ENCODE measurements at regions of chr10 and their contacts with region 1.

Region 1: GRCh38 chr10:22714479-22715289 is at the start of gene PIP4K2A:
- DNase-seq: peak; percentile 71 to 82 (median 81)
- H3K4me3 ChIP-seq: peak within 1 kb of the TSS; percentile 91
- H3K4me3 Mint-ChIP-seq: peak within 1 kb of the TSS; percentile 90 to 99 (median 95)
- H3K27ac ChIP-seq: peak within 1 kb of the TSS; percentile 88
- H3K27ac Mint-ChIP-seq: peak within 1 kb of the TSS; percentile 84 to 95 (median 93)
- H3K4me1 ChIP-seq: peaks cover 20% of the 10 kb centered on the region
- H3K4me1 Mint-ChIP-seq: peaks cover 30 to 34% (median 33%) of the 10 kb centered on the region in 3 donors
- H3K27me3 ChIP-seq: no peaks in the 10 kb centered on the region
- H3K27me3 Mint-ChIP-seq: peaks cover 0 to 4% of the 10 kb centered on the region in 2 donors
- total RNA-seq, gene PIP4K2A: 116 to 130 TPM

Region 2: DNA sequence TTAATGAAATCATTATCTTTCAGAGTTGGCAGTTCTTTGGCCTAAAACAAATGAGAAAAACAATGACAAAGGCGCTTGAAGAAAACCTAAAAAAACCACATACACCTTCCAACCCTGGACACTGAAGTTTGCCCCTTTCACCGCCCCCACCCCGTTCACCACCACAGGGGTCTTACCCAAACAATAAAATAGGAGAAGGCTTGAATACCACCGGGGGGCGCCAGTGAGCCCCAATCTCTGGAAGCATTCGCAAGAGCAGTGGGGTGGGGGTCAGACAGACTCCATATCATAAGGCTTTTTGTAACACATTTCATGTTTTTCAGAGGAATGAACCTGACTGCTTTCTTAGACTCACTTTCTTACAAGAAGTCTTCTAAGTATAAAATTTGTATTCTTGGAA is 164.0 kb before region 1 on chr10:
- CTCF ChIA-PET with region 1: no interaction called
- POLR2A ChIA-PET with region 1: no interaction called
- DNase-seq: peak; percentile 55 to 81 (median 65)
- H3K4me3 ChIP-seq: no peak overlapping the region
- H3K4me3 Mint-ChIP-seq: peak overlapping the region in 1 of 7 donors; percentile 46
- H3K27ac ChIP-seq: no peak overlapping the region
- H3K27ac Mint-ChIP-seq: peak overlapping the region in 7 of 8 donors; percentile 40 to 92 (median 69)
- H3K4me1 ChIP-seq: no peaks in the 10 kb centered on the region
- H3K4me1 Mint-ChIP-seq: peaks cover 33 to 41% (median 38%) of the 10 kb centered on the region in 3 donors
- H3K27me3 ChIP-seq: no peaks in the 10 kb centered on the region
- H3K27me3 Mint-ChIP-seq: no peaks in the 10 kb centered on the region

Region 3: GRCh38 chr10:22580711-22581110 is 134.0 kb before region 1 on chr10:
- CTCF ChIA-PET with region 1: interaction called, 5 read pairs
- POLR2A ChIA-PET with region 1: interaction called, 17 read pairs
- DNase-seq: no peak
- H3K4me3 ChIP-seq: no peak overlapping the region
- H3K4me3 Mint-ChIP-seq: no peak overlapping the region
- H3K27ac ChIP-seq: no peak overlapping the region
- H3K27ac Mint-ChIP-seq: peak overlapping the region in 7 of 8 donors; percentile 48 to 86 (median 70)
- H3K4me1 ChIP-seq: no peaks in the 10 kb centered on the region
- H3K4me1 Mint-ChIP-seq: peaks cover 54 to 85% (median 84%) of the 10 kb centered on the region in 3 donors
- H3K27me3 ChIP-seq: no peaks in the 10 kb centered on the region
- H3K27me3 Mint-ChIP-seq: no peaks in the 10 kb centered on the region

Region 4: GRCh38 chr10:22874189-22874854 is 159.6 kb after region 1 on chr10:
- CTCF ChIA-PET with region 1: no interaction called
- POLR2A ChIA-PET with region 1: no interaction called
- DNase-seq: no peak
- H3K4me3 ChIP-seq: no peak overlapping the region
- H3K4me3 Mint-ChIP-seq: no peak overlapping the region
- H3K27ac ChIP-seq: no peak overlapping the region
- H3K27ac Mint-ChIP-seq: peak overlapping the region in 1 of 8 donors; percentile 15
- H3K4me1 ChIP-seq: no peaks in the 10 kb centered on the region
- H3K4me1 Mint-ChIP-seq: peaks cover 6 to 8% (median 7%) of the 10 kb centered on the region in 3 donors
- H3K27me3 ChIP-seq: no peaks in the 10 kb centered on the region
- H3K27me3 Mint-ChIP-seq: peaks cover 8 to 15% of the 10 kb centered on the region in 2 donors